Heart right ventricle (tissue), 16 donors: ENCODE measurements at regions of chr1 and their contacts with region 1.

Region 1: GRCh38 chr1:179365320-179366092 is at the start of gene AXDND1:
- DNase-seq: peak; percentile 86 to 90
- ATAC-seq: peak; percentile 95 to 98 (median 97)
- H3K4me3 ChIP-seq: peak within 1 kb of the TSS; percentile 60 to 79 (median 70)
- H3K27ac ChIP-seq: peak within 1 kb of the TSS; percentile 83 to 96 (median 88)
- H3K4me1 ChIP-seq: peaks cover 0 to 12% (median 0%) of the 10 kb centered on the region in 9 donors
- H3K27me3 ChIP-seq: no peaks in the 10 kb centered on the region
- CTCF ChIP-seq: peak in 3 of 9 donors; percentile 30 to 60 (median 32)
- total RNA-seq, gene AXDND1: 0.12 to 0.17 (median 0.17) TPM in 3 of 10 donors, not detected in the others

Region 2: DNA sequence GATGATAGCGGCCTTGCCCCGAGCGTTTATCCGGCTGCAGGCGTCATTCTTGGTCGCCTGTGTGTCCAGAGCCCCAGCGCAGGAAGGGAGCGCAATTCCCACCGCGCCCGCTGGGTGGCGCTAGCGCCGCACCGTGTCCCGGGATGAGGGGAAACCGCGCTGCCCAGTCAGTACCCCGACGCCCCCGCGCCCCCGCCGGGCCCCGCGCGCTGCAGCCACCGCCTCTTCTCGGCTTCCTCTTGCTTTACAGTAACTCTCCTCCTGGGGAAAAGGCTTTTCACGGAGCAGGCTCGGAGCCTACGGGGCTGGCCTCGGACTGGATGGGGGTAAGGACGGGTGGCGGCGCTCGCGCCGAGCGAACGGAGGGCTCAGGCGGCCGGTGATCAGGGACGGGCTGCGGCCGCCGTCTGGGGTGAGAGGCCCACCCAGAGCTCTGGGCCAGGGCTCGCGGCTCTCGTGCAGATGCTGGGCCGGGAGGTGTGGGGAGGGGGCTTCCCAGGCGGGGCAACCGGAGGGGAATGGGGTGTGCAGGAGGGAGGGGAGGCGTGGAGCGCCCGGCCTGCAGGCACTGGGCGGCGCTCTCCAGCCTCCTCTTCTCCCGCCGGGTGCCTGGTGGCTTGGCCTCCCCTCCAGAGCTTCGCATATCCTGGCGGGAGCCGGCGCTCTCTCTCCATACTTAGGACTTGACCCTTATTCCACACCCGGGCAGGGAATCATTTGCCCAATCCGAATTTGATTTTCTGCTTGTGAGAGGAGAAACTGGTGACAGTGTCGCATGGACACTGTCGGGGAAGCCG is 822.7 kb before region 1 on chr1:
- intact Hi-C with region 1: loop called in 1 of 10 experiments (anchors 5 kb)
- DNase-seq: peak; percentile 90 to 94
- ATAC-seq: peak; percentile 88 to 97 (median 92)
- H3K4me3 ChIP-seq: peak overlapping the region; percentile 50 to 87 (median 66)
- H3K27ac ChIP-seq: peak overlapping the region; percentile 4 to 88 (median 80)
- H3K4me1 ChIP-seq: peaks cover 0 to 33% (median 18%) of the 10 kb centered on the region in 9 donors
- H3K27me3 ChIP-seq: no peaks in the 10 kb centered on the region
- CTCF ChIP-seq: peak; percentile 91 to 100 (median 99)

Region 3: DNA sequence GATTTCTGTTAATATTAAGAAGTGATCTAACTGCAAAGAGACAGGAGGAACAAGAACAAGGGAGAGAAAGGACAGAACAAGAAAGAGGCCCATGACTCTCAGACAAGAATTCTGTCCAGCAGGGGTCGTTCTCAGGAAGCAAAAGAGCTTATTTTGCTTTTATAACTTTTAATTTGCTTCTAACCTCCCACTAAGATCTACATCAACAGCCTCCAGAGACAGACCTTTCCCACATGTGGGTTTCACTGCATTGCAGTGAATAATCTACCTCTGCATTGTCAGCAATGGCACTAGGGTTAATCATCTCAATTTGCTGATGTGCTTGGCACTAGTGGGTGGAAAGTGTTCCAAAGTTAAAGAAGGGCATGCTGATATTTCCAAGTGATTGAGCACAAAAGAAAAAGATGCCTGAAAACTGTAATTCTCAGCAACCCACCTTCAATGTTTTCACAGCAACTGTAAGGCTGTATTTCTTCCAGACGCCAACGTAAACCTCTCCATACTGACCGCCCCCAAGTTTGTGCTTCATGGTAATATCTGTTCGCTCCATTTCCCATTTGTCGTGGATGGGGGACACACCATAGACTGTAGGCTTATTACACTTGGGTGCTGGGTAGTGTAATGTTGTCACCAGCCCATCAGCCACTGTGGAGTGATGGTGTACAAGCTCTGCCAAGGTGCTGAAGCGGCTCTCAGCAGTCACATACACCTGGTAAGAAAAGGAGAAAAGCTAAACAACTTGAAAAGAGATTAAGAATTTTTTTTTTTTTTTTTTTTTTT is 244.2 kb before region 1 on chr1:
- intact Hi-C with region 1: loop called in 4 of 10 experiments (anchors 5 kb)
- DNase-seq: no peak
- ATAC-seq: peak in 4 of 8 donors; percentile 27 to 61 (median 51)
- H3K4me3 ChIP-seq: no peak overlapping the region
- H3K27ac ChIP-seq: peak overlapping the region in 1 of 10 donors; percentile 2
- H3K4me1 ChIP-seq: peaks cover 0 to 19% (median 4%) of the 10 kb centered on the region in 9 donors
- H3K27me3 ChIP-seq: no peaks in the 10 kb centered on the region
- CTCF ChIP-seq: peak; percentile 35 to 75 (median 63)

Region 4: GRCh38 chr1:179229214-179230140 is 136.0 kb before region 1 on chr1 and contains the start of gene ABL2:
- intact Hi-C with region 1: loop called in 2 of 10 experiments (anchors 5 to 10 kb)
- DNase-seq: peak; percentile 39 to 50
- ATAC-seq: peak; percentile 67 to 92 (median 82)
- H3K4me3 ChIP-seq: peak within 1 kb of the TSS; percentile 62 to 100 (median 98)
- H3K27ac ChIP-seq: peak within 1 kb of the TSS; percentile 52 to 90 (median 86)
- H3K4me1 ChIP-seq: peaks cover 0 to 35% (median 21%) of the 10 kb centered on the region in 9 donors
- H3K27me3 ChIP-seq: no peaks in the 10 kb centered on the region
- CTCF ChIP-seq: no peak
- total RNA-seq, gene ABL2: 7.9 to 14.4 (median 11.3) TPM

Region 5: GRCh38 chr1:179293340-179294327 is 71.9 kb before region 1 on chr1 and contains the start of gene SOAT1:
- intact Hi-C with region 1: loop called in 7 of 10 experiments (anchors 5 to 10 kb)
- DNase-seq: peak; percentile 94 to 97
- ATAC-seq: peak; percentile 98 to 100 (median 99)
- H3K4me3 ChIP-seq: peak within 1 kb of the TSS; percentile 55 to 84 (median 73)
- H3K27ac ChIP-seq: peak within 1 kb of the TSS; percentile 55 to 93 (median 90)
- H3K4me1 ChIP-seq: peaks cover 0 to 49% (median 20%) of the 10 kb centered on the region in 9 donors
- H3K27me3 ChIP-seq: no peaks in the 10 kb centered on the region
- CTCF ChIP-seq: peak in 4 of 9 donors; percentile 36 to 49 (median 41)
- total RNA-seq, gene SOAT1: 5.5 to 19.4 (median 7.6) TPM